Body of pancreas (tissue), 4 donors: ENCODE measurements at regions of chr11 and their contacts with region 1.

Region 1: DNA sequence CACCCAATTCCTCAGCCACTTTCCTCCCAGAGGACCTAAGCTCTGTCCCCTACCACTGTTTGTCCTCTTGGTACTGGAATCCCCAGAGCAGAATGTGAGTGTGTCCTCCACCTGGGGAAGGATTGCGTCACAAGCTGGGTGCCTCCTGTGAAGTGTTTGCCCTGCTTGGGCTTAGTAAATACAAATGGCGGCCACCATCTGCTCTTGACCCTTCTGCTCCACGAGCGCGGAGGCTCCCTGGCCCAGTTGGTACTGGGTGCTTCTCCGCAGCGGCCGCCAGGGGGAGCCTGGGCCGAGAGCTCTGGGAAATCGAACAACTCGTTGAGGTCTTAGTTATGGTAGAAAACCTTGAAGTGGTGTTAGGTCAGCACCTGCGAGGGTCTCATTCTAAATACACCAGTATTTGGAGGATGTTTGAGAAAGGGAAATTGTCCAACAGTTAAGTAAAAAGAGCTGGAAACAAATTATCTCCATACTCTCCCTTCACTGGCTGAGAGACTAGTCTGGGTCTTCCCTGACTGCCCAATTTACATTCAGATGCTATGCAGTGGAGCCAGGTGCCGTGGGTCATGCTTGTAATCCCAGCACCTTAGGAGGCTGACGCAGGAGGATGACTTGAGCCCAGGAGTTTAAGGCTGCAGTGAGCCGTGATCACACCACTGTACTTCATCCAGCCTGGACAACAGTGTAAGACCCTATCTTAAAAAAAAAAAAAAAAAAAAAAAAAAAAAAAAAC is 74.6 kb upstream of the TEAD1 start:
- DNase-seq: peak; percentile 74 to 80 (median 76)
- ATAC-seq: peak; percentile 84
- H3K4me3 ChIP-seq: no peak overlapping the region
- H3K27ac ChIP-seq: no peak overlapping the region
- H3K4me1 ChIP-seq: peaks cover 8% of the 10 kb centered on the region
- H3K27me3 ChIP-seq: no peaks in the 10 kb centered on the region
- CTCF ChIP-seq: peak; percentile 77 to 86 (median 80)
- POLR2A ChIP-seq: no peak

Region 2: DNA sequence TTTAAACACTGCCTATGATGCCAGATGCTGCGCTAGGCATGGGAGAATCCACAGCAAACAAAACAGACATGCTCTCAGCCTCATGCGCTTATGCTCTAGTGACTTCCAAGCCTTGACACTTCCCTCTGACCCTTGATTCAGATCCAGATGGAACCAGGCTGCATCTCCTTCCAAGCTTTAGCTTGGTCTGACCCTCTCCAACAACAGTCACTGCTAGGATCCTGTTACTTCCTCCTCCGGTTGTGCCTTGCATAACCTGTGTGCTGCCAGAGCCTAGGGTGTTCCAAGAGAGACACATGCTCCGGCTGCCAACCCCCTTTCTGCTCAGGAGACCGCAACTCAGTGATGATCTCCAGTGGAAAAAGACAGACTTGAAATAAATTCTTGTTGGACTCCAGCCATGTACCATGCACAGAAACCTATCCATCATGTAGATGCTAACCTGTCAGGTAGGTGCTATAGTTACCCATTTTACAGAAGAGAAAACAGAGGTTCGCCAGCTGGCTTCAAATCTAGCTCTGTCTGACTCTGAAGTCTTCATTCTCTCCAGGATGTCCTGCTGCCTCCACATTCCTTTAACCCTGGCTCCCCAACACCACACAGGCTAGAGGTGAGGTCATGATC is 61.7 kb before region 1 on chr11:
- intact Hi-C with region 1: no loop called
- DNase-seq: peak in 2 of 4 donors; percentile 27 to 36
- ATAC-seq: peak; percentile 44
- H3K4me3 ChIP-seq: no peak overlapping the region
- H3K27ac ChIP-seq: no peak overlapping the region
- H3K4me1 ChIP-seq: peaks cover 4% of the 10 kb centered on the region
- H3K27me3 ChIP-seq: no peaks in the 10 kb centered on the region
- CTCF ChIP-seq: no peak
- POLR2A ChIP-seq: no peak

Region 3: DNA sequence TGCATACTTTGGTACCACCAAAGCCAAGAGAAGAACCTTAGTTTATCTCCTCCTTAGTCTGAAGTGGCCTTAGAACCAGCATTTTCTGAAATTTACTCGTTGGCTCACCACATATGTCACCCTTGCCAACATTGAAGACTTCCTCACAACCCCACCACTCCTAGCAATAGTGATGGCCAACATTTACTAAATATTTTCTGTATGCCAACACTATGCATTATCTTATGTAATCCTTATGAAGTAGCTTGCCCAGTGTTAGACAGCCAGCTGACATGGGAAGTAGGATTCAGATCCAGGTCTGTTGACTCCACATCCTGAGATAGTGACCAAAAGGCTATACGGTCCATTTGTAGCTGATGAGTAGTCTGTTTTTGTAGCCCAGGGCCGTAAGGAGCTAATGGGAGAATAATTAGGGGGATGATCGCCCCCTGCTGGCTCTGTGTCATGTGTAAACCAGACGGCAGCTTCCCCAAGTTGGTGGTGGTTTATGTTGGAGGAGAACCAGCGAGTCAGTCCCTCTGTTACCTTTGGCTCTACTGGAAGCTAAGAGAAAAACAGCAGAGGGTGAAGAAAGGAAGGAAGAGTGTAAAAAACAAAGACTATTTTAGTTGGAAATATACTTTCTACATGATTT is 289.1 kb after region 1 on chr11:
- intact Hi-C with region 1: loop called (anchors 5 kb)
- DNase-seq: peak; percentile 89 to 95 (median 91)
- ATAC-seq: peak; percentile 90
- H3K4me3 ChIP-seq: no peak overlapping the region
- H3K27ac ChIP-seq: peak overlapping the region in 1 of 4 donors; percentile 28
- H3K4me1 ChIP-seq: peaks cover 17% of the 10 kb centered on the region
- H3K27me3 ChIP-seq: no peaks in the 10 kb centered on the region
- CTCF ChIP-seq: peak; percentile 50 to 88 (median 82)
- POLR2A ChIP-seq: no peak